Heart left ventricle (tissue), 16 donors: ENCODE measurements at regions of chr9 and their contacts with region 1.

Region 1: DNA sequence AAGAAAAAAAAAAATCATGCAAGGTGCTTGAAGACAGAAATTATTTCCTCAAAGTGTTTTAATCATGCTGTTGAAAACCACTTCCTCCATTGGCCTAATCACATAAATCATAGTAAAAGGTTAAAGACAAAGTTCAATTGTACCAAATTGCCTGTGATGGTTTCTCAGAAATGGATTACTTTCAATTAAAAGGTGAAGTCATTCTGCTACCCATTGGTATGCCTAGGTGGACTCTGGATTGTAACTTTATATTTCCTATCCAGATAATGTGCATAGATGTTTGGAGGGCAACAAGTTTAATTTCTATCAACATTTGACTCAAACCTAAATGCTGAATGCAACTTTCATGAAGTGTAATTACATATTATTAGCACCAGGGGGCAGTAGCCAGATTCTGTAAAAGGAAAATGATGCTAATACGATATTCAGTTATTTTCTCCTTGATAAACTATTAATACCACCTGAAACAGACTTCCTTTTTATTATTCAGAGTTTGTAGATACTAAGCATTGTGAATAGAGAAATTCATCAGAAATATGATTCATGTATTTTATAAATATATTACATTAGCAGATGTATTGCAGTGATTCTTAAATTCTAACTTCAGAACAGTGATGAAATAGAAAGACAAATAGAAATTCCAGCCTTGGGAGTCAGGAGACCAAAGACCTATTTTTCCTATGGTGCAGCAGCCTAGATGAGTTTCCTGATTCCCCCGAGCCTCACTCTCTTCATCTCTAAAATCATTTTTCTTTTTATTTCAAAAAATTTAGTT is 148.2 kb downstream of the CAAP1 start:
- DNase-seq: no peak
- ATAC-seq: no peak
- H3K4me3 ChIP-seq: no peak overlapping the region
- H3K27ac ChIP-seq: no peak overlapping the region
- H3K4me1 ChIP-seq: no peaks in the 10 kb centered on the region
- H3K27me3 ChIP-seq: no peaks in the 10 kb centered on the region
- CTCF ChIP-seq: peak; percentile 64 to 92 (median 82)
- POLR2A ChIP-seq: no peak

Region 2: GRCh38 chr9:26597542-26598149 is 146.7 kb before region 1 on chr9:
- intact Hi-C with region 1: no loop called
- DNase-seq: no peak
- ATAC-seq: no peak
- H3K4me3 ChIP-seq: no peak overlapping the region
- H3K27ac ChIP-seq: no peak overlapping the region
- H3K4me1 ChIP-seq: no peaks in the 10 kb centered on the region
- H3K27me3 ChIP-seq: no peaks in the 10 kb centered on the region
- CTCF ChIP-seq: no peak
- POLR2A ChIP-seq: no peak

Region 3: GRCh38 chr9:26756881-26757280 is 12.5 kb after region 1 on chr9:
- intact Hi-C with region 1: no loop called
- DNase-seq: no peak
- ATAC-seq: no peak
- H3K4me3 ChIP-seq: no peak overlapping the region
- H3K27ac ChIP-seq: no peak overlapping the region
- H3K4me1 ChIP-seq: no peaks in the 10 kb centered on the region
- H3K27me3 ChIP-seq: no peaks in the 10 kb centered on the region
- CTCF ChIP-seq: no peak
- POLR2A ChIP-seq: no peak

Region 4: DNA sequence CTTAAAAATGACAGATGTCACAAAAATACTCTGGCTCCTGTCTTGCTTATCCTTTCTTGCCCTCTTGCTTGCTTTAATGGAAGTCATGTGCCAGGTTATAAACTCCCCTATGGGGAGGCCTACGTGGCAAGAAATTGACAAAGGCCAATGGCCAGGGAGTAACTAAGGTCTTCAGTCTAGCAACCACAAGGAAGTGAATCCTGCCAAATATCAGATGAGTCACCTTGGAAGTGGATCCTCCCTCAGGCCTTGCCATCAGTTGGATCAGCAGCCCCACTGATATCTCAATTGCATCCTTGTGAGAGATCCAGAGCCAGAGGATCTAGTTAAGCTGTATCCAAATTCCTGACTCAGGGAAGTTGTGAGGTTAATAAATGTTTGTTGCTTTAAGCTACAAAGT is 65.4 kb after region 1 on chr9:
- intact Hi-C with region 1: loop called in 1 of 10 experiments (anchors 10 kb)
- DNase-seq: no peak
- ATAC-seq: no peak
- H3K4me3 ChIP-seq: no peak overlapping the region
- H3K27ac ChIP-seq: no peak overlapping the region
- H3K4me1 ChIP-seq: no peaks in the 10 kb centered on the region
- H3K27me3 ChIP-seq: no peaks in the 10 kb centered on the region
- CTCF ChIP-seq: no peak
- POLR2A ChIP-seq: no peak

Region 5: DNA sequence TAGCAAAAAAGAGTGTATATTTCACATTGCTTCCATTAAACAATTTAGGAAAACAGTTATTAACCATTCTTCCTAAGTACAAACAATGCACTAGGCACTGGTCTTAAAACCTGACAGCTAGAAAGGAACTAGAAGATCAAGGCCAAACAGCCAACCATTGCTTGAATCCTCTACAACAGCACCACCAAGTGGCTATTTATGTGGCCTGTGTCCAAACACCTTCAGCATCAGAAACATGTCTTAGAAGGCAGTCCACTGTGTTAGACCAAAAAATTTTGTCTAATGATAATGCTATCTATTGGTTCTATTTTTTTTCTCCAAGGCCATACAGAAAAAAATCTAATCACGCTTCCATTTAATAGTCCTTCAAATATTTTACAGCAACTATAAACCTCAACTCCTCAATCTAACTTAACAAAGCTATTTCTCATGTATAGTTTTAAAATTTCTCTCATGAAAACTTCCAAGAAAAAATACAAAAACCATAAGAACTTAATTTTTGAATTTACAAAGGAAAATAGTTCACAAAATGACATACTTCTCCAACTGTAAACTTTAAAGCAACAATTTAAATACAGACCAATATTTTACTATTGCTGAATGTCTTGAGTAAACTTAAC is 112.1 kb after region 1 on chr9:
- intact Hi-C with region 1: loop called in 4 of 10 experiments (anchors 5 to 10 kb)
- DNase-seq: no peak
- ATAC-seq: no peak
- H3K4me3 ChIP-seq: no peak overlapping the region
- H3K27ac ChIP-seq: no peak overlapping the region
- H3K4me1 ChIP-seq: peaks cover 0 to under 1% (median 0%) of the 10 kb centered on the region in 12 donors
- H3K27me3 ChIP-seq: no peaks in the 10 kb centered on the region
- CTCF ChIP-seq: peak in 7 of 12 donors; percentile 6 to 35 (median 26)
- POLR2A ChIP-seq: no peak

Region 6: DNA sequence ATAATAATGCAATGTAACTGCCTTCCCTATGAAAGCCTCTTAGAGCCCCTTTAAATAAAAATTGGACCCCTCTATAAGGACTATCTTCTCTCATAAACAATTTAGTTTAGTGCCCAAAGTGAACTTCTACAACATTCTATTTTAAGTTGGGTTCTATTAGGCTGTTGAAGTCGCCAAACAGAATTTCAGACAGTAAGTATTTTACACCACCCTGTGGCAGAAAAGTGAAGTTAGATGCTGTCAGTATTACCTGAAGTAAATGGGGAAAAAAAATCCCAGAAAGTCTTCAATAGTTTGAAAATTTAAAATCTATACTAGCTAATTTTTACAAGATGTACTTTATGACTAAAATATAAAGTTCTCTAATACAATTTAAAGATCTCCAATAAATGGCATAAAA is 118.7 kb after region 1 on chr9:
- intact Hi-C with region 1: loop called in 4 of 10 experiments (anchors 5 to 10 kb)
- DNase-seq: no peak
- ATAC-seq: no peak
- H3K4me3 ChIP-seq: no peak overlapping the region
- H3K27ac ChIP-seq: no peak overlapping the region
- H3K4me1 ChIP-seq: no peaks in the 10 kb centered on the region
- H3K27me3 ChIP-seq: no peaks in the 10 kb centered on the region
- CTCF ChIP-seq: peak in 4 of 12 donors; percentile 9 to 33 (median 24)
- POLR2A ChIP-seq: no peak

Region 7: DNA sequence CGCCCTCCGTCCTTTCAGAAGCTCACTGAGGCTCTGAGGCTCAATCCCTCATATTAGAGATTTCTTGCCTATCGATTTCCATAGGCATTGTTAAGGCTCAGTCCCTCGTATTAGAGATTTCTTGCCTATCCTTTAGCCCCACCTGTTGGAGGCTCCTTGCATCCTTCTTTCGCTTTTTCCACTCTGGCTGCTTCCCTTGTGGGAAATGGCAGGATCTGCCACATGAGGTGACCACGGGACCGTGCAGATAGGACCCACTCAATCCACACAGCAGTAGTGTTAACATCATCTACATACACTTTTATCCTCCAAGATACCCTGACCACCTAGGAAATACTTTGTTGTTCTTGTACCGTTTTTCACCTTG is 231.3 kb after region 1 on chr9:
- intact Hi-C with region 1: loop called (anchors 2 to 5 kb)
- DNase-seq: peak in 3 of 5 donors; percentile 18 to 30 (median 25)
- ATAC-seq: peak in 3 of 4 donors; percentile 31 to 73 (median 62)
- H3K4me3 ChIP-seq: peak overlapping the region in 1 of 12 donors; percentile 17
- H3K27ac ChIP-seq: no peak overlapping the region
- H3K4me1 ChIP-seq: peaks cover 0 to 6% (median 0%) of the 10 kb centered on the region in 12 donors
- H3K27me3 ChIP-seq: no peaks in the 10 kb centered on the region
- CTCF ChIP-seq: peak; percentile 49 to 74 (median 62)
- POLR2A ChIP-seq: no peak

Region 8: GRCh38 chr9:27276193-27277030 is 532.0 kb after region 1 on chr9:
- intact Hi-C with region 1: loop called in 3 of 10 experiments (anchors 5 to 10 kb)
- DNase-seq: no peak
- ATAC-seq: peak in 1 of 4 donors; percentile 56
- H3K4me3 ChIP-seq: peak overlapping the region in 3 of 12 donors; percentile 11 to 22 (median 13)
- H3K27ac ChIP-seq: no peak overlapping the region
- H3K4me1 ChIP-seq: peaks cover 0 to 19% (median 0%) of the 10 kb centered on the region in 12 donors
- H3K27me3 ChIP-seq: no peaks in the 10 kb centered on the region
- CTCF ChIP-seq: peak; percentile 55 to 92 (median 80)
- POLR2A ChIP-seq: no peak